ENCODE measurements at regions of chr3 and their contacts with region 1.

Region 1: GRCh38 chr3:186175721-186176234 is 66.9 kb upstream of the ETV5 start:
- DNase-seq: no peak
- ATAC-seq: no peak
- H3K4me3 ChIP-seq: no peak overlapping the region
- H3K27ac ChIP-seq: no peak overlapping the region
- H3K4me1 ChIP-seq: no peaks in the 10 kb centered on the region
- H3K27me3 ChIP-seq: no peaks in the 10 kb centered on the region
- CTCF ChIP-seq: no peak

Region 2: DNA sequence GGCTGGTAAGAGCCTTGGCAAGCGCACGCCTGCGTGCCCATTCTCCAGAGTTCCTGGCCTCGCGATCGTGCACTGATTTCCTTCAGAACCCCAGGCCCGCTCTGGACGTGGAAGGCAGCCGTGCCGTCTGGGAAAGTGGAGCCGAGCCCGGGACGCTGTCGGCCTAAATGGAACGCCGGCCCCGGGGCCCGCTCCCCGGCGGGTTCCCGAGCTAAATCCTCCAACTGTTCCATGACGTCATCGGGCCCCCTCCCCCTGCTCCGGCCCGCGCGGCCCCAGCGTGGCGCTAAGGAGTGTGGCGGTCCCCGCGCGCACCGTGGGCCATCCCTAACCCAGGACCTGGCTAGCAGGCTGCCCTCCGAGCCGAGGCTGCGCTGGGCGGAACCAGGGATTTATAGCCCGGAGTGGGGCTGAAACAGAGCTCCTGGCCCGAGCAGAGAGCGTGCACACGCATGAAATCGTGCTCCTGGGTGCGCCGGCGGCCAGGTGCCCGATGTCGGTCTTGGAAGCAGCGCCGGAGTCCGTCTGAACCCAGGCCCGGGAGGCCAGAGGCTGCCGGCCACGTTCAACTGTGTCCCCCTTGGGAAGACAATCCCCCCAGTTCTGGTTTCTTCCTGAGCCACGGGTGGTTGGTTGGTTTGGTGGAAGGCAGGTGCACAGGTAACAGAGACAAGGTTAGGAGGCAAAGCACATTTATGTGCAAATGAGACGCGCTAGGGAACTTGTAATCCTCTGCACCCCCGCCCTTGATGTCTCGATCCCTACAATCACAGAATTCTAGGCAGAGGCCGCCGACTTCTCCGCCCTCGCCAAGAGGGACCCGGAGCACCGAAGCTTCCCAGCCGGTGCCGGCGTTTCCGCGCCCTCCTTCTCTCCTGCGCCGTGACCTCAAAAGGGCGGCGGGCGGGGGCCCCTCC is 18.0 kb after region 1 on chr3:
- intact Hi-C with region 1: loop called in 1 of 2 experiments (anchors 1 kb)
- DNase-seq: peak in 1 of 2 donors; percentile 21
- ATAC-seq: peak; percentile 55 to 82 (median 63)
- H3K4me3 ChIP-seq: peak overlapping the region; percentile 54
- H3K27ac ChIP-seq: no peak overlapping the region
- H3K4me1 ChIP-seq: no peaks in the 10 kb centered on the region
- H3K27me3 ChIP-seq: peaks cover 0 to 3% (median 0%) of the 10 kb centered on the region in 3 donors
- CTCF ChIP-seq: no peak